AG04450 (cell line): ENCODE measurements at regions of chr3 and their contacts with region 1.

Region 1: GRCh38 chr3:31777092-31777491 is 204.0 kb downstream of the OSBPL10 start:
- DNase-seq: no peak
- H3K4me3 ChIP-seq: no peak overlapping the region
- H3K27ac ChIP-seq: no peak overlapping the region
- H3K27me3 ChIP-seq: no peaks in the 10 kb centered on the region
- CTCF ChIP-seq: no peak

Region 2: GRCh38 chr3:31762097-31762764 is 14.9 kb before region 1 on chr3:
- CTCF ChIA-PET with region 1: interaction called, 10 read pairs
- POLR2A ChIA-PET with region 1: no interaction called
- DNase-seq: no peak
- H3K4me3 ChIP-seq: no peak overlapping the region
- H3K27ac ChIP-seq: no peak overlapping the region
- H3K27me3 ChIP-seq: no peaks in the 10 kb centered on the region
- CTCF ChIP-seq: no peak